ENCODE measurements at regions of chr2 and their contacts with region 1.

Region 1: GRCh38 chr2:25664183-25664964 is 9.0 kb downstream of the DTNB start:
- DNase-seq: peak; percentile 66
- H3K4me3 ChIP-seq: no peak overlapping the region
- H3K27ac ChIP-seq: no peak overlapping the region
- H3K4me1 ChIP-seq: peaks cover 0 to 3% (median 0%) of the 10 kb centered on the region in 4 donors
- H3K27me3 ChIP-seq: no peaks in the 10 kb centered on the region
- CTCF ChIP-seq: peak in 3 of 4 experiments; percentile 21 to 43 (median 42)
- EP300 ChIP-seq: no peak
- POLR2A ChIP-seq: no peak

Region 2: DNA sequence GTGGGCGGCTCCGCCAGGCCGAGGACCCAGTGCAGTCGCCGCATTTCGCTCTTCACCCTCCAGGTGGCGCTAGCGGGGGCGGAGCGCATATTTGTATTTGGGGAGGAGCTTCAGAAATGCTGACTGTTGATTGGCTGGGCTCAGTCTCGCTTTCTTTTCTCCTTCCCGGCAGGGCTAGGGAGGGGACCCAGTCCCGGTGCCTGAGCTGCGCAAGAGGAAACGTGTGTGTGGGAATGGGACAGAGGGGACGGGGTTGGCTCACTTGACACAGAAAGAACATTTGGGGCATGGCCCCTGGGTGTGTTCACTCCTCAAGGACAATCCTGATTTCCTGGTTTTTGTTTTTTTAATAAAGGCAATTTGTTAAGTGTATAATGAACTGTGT is 302.3 kb before region 1 on chr2:
- intact Hi-C with region 1: loop called (anchors 10 kb)
- DNase-seq: peak; percentile 96
- H3K4me3 ChIP-seq: peak overlapping the region; percentile 17 to 48 (median 44)
- H3K27ac ChIP-seq: peak overlapping the region; percentile 35 to 78 (median 69)
- H3K4me1 ChIP-seq: peaks cover 0 to 11% (median 10%) of the 10 kb centered on the region in 4 donors
- H3K27me3 ChIP-seq: no peaks in the 10 kb centered on the region
- CTCF ChIP-seq: peak; percentile 70 to 98 (median 90)
- EP300 ChIP-seq: no peak
- POLR2A ChIP-seq: peak; percentile 62 to 68

Region 3: DNA sequence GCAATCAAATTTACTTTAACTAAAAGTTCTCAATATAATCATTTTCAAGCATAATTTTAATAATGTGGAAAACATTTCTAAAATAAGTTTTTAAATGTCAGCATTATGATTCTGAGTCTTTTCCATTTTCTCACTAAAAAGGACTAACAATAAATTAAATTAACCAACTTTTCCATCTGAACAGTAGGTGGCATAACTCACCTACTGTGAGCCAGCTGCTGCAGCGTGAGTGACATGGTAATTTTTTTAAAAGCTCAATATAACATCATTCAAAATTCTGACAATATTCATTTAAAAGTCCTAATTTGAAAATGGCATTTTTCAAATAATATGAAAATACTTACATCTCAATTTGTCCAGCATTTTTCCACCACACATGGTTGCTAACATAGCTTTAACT is 57.5 kb before region 1 on chr2:
- intact Hi-C with region 1: loop called (anchors 2 kb)
- DNase-seq: no peak
- H3K4me3 ChIP-seq: no peak overlapping the region
- H3K27ac ChIP-seq: no peak overlapping the region
- H3K4me1 ChIP-seq: no peaks in the 10 kb centered on the region
- H3K27me3 ChIP-seq: no peaks in the 10 kb centered on the region
- CTCF ChIP-seq: peak in 2 of 4 experiments; percentile 20 to 34
- EP300 ChIP-seq: no peak
- POLR2A ChIP-seq: no peak